ENCODE measurements at regions of chr7 and their contacts with region 1.

Region 1: GRCh38 chr7:37208528-37208927 is 240.1 kb downstream of the ELMO1 start:
- DNase-seq: peak; percentile 42
- CTCF ChIP-seq: peak; percentile 69

Region 2: DNA sequence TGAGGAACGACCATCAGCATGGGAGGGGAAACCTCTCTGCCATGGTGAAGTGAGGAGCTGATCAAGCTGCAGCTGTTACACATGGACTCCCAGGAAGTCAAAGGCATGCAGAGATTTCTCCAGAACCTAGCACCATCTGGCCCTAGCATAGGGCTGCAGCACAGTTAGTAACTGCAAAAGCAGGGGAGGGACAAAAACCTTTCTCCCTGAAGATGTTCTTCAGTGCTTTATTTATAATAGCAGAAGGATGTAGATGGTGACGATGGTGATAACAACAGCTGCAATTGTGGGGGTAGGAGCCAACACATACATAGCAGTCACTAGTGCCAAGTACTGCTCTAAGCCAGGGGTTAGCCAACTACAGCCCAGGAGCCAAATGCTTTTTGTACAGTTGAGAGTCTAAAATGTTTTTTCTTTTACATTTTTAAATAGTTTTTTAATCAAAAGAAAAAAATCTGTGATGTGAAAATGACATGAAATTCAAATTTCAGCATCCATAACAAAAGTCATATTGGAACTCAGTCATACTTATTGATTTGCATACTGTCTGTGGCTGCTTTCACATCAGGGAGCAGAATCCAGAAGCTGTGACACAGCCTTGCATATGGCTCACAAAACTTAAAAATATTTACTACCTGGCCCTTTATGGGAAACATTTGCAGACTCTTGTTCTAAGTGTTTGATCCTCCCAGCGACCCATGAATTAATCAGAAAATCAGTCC is 59.3 kb before region 1 on chr7:
- CTCF ChIA-PET with region 1: no interaction called
- POLR2A ChIA-PET with region 1: no interaction called
- DNase-seq: no peak
- CTCF ChIP-seq: no peak

Region 3: GRCh38 chr7:37162106-37162505 is 46.4 kb before region 1 on chr7:
- CTCF ChIA-PET with region 1: no interaction called
- POLR2A ChIA-PET with region 1: no interaction called
- DNase-seq: no peak
- CTCF ChIP-seq: no peak

Region 4: DNA sequence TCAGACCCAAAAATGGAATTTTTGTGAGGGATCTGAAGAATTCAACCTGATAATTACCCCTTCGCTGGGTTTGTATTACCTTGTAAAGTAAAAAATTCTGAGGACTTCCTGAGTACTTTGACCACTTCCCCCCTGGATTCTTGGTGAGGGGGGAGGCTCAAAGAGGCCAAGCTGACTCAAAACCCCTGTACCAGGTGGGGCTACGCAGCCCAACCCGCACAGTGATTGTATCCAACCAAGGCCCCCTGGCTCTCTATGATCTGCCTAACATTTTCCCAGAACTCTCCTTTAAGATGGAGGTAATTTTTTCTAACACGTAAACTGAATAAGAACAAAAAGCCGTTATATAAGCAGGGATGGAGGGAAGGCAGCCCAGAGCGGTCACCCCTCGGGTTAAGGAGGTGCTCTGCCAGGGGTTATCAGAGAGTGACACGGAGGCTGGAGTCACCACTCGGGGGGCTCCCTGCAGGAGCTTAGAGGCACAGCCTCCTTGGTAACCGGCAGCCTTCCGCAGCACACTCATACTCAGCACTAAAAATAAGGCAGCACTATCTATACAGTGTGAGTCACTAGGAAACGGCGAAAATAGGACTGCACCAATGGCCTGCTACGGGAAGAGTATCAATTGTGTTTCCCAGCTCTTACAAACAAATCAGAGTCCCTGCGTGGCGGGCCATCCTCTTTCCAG is 15.3 kb before region 1 on chr7:
- CTCF ChIA-PET with region 1: interaction called, 14 read pairs
- POLR2A ChIA-PET with region 1: no interaction called
- DNase-seq: no peak
- CTCF ChIP-seq: no peak

Region 5: GRCh38 chr7:37224746-37225145 is 16.2 kb after region 1 on chr7:
- CTCF ChIA-PET with region 1: interaction called, 18 read pairs
- POLR2A ChIA-PET with region 1: no interaction called
- DNase-seq: no peak
- CTCF ChIP-seq: no peak

Region 6: GRCh38 chr7:37311355-37311754 is 102.8 kb after region 1 on chr7:
- CTCF ChIA-PET with region 1: no interaction called
- POLR2A ChIA-PET with region 1: no interaction called
- DNase-seq: no peak
- CTCF ChIP-seq: no peak